T-cell (primary cell): ENCODE measurements at regions of chr17 and their contacts with region 1.

Region 1: DNA sequence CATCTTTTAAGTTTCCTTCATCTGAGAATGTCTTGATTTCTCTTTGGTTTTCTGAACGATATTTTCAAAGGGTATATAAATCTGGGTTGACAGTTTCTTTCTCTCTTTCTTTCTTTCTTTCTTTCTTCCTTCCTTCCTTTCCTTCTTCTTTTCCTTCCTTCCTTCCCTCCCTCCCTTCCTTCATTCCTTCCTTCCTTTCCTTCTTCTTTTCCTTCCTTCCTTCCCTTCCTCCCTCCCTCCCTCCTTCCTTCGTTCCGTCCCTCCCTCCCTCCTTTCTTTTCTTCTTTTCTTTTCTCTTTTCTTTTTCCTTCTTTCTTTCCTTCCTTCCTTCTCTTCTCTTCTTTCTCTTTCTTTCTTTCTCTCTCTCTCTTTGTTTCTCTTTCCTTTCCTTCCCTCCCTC is 7.6 kb upstream of the KRT39 start:
- DNase-seq: no peak
- ATAC-seq: no peak
- H3K4me3 ChIP-seq: no peak overlapping the region
- H3K4me3 Mint-ChIP-seq: no peak overlapping the region
- H3K27ac ChIP-seq: no peak overlapping the region
- H3K27ac Mint-ChIP-seq: no peak overlapping the region
- H3K4me1 ChIP-seq: no peaks in the 10 kb centered on the region
- H3K4me1 Mint-ChIP-seq: no peaks in the 10 kb centered on the region
- H3K27me3 ChIP-seq: peaks cover 0 to 8% of the 10 kb centered on the region in 2 experiments
- H3K27me3 Mint-ChIP-seq: peaks cover 26 to 27% of the 10 kb centered on the region in 2 donors

Region 2: DNA sequence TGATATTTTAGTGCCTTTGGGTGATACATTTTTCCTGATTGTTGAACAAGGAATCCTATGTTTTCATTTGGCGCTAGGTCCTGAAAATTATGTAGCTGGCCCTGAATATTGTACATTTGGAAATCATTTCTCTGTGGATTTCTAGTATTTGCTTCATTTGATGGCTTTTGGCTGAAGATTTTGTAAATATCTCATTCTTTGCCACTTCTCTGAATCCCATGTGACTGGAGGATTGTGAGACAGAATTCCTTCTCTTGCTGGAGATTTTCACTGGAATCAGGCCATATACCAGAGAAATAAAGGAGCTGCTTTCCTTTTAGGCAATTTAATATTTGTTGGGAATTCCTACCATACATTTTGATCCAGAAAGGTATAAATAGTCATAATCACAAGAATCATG is 183.3 kb before region 1 on chr17:
- CTCF ChIA-PET with region 1: no interaction called
- POLR2A ChIA-PET with region 1: interaction called in 1 of 2 experiments, 28 read pairs
- DNase-seq: no peak
- ATAC-seq: no peak
- H3K4me3 ChIP-seq: no peak overlapping the region
- H3K4me3 Mint-ChIP-seq: no peak overlapping the region
- H3K27ac ChIP-seq: no peak overlapping the region
- H3K27ac Mint-ChIP-seq: no peak overlapping the region
- H3K4me1 ChIP-seq: no peaks in the 10 kb centered on the region
- H3K4me1 Mint-ChIP-seq: no peaks in the 10 kb centered on the region
- H3K27me3 ChIP-seq: peaks cover 0 to 16% of the 10 kb centered on the region in 2 experiments
- H3K27me3 Mint-ChIP-seq: peaks cover 21 to 31% of the 10 kb centered on the region in 2 donors